ENCODE measurements at regions of chr7 and their contacts with region 1.

Region 1: GRCh38 chr7:55951637-55952351 is at the start of gene MRPS17:
- DNase-seq: peak; percentile 94
- ATAC-seq: peak; percentile 100
- H3K4me3 ChIP-seq: peak within 1 kb of the TSS; percentile 72 to 87 (median 83)
- H3K4me3 Mint-ChIP-seq: peak within 1 kb of the TSS; percentile 96
- H3K27ac ChIP-seq: peak within 1 kb of the TSS; percentile 79 to 90
- H3K27ac Mint-ChIP-seq: peak within 1 kb of the TSS; percentile 93
- H3K4me1 ChIP-seq: peaks cover 5 to 19% of the 10 kb centered on the region in 2 donors
- H3K4me1 Mint-ChIP-seq: peaks cover 13% of the 10 kb centered on the region
- H3K27me3 ChIP-seq: no peaks in the 10 kb centered on the region
- H3K27me3 Mint-ChIP-seq: no peaks in the 10 kb centered on the region
- CTCF ChIP-seq: no peak
- total RNA-seq, gene MRPS17: 10.3 and 13.0 TPM in 2 replicates

Region 2: DNA sequence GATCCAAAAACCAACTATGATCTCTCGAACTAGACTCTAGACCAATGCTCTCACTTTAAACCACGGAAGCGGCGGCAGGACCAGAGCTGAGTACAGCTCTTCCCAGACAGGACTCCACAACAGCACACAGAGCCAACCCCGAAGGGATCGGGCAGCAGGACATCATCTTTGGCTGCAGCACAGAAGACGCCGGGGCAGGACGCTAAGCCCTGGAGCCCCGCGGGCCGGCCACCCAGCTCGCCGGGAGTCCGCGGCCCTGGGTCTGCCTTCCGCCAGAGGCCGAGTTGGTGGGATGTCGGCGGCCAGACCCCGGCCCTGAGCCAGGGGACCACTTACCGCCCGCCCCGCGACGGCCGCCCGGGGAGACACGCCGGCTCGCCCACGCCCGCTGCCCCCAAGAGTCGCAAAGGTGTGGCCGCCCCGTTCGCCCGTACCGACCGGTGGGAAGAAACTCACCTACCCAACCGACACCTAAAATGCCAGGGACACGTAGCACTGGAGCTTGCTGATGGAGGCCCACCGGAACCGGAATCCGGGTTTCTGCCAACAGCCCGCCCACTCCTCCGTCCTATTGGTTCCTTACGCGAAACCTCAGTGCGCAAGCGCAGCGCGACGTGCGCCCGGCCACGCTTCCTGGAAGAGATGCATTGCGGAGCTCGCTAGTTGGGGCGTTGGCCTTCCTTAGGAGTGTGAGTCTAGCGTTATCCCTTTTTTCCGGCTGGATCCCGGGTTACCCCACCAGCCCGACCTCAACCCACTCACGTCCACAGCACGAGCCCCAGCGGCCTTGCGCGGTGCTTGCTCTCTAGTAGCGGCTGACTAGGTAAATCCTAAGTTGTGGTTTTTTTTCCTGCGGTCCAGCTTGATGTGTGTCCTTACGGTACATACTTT is 1192.8 kb before region 1 on chr7 and contains the start of gene SEC61G:
- CTCF ChIA-PET with region 1: no interaction called
- POLR2A ChIA-PET with region 1: no interaction called
- intact Hi-C with region 1: loop called (anchors 2 kb)
- DNase-seq: peak; percentile 96
- ATAC-seq: peak; percentile 97
- H3K4me3 ChIP-seq: peak within 1 kb of the TSS; percentile 63 to 94 (median 89)
- H3K4me3 Mint-ChIP-seq: peak within 1 kb of the TSS; percentile 100
- H3K27ac ChIP-seq: peak within 1 kb of the TSS; percentile 78 to 80
- H3K27ac Mint-ChIP-seq: peak within 1 kb of the TSS; percentile 96
- H3K4me1 ChIP-seq: peaks cover 10 to 21% of the 10 kb centered on the region in 2 donors
- H3K4me1 Mint-ChIP-seq: peaks cover 27% of the 10 kb centered on the region
- H3K27me3 ChIP-seq: no peaks in the 10 kb centered on the region
- H3K27me3 Mint-ChIP-seq: peaks cover 2% of the 10 kb centered on the region
- CTCF ChIP-seq: no peak
- total RNA-seq, gene SEC61G: 23.6 and 26.8 TPM in 2 replicates

Region 3: GRCh38 chr7:55887821-55888247 is 64.0 kb before region 1 on chr7:
- CTCF ChIA-PET with region 1: no interaction called
- POLR2A ChIA-PET with region 1: no interaction called
- intact Hi-C with region 1: loop called (anchors 1 kb)
- DNase-seq: peak; percentile 34
- ATAC-seq: no peak
- H3K4me3 ChIP-seq: peak overlapping the region; percentile 36 to 70 (median 59)
- H3K4me3 Mint-ChIP-seq: peak overlapping the region; percentile 90
- H3K27ac ChIP-seq: no peak overlapping the region
- H3K27ac Mint-ChIP-seq: peak overlapping the region; percentile 86
- H3K4me1 ChIP-seq: peaks cover 0 to 11% of the 10 kb centered on the region in 2 donors
- H3K4me1 Mint-ChIP-seq: peaks cover 8% of the 10 kb centered on the region
- H3K27me3 ChIP-seq: no peaks in the 10 kb centered on the region
- H3K27me3 Mint-ChIP-seq: peaks cover 4% of the 10 kb centered on the region
- CTCF ChIP-seq: no peak

Region 4: DNA sequence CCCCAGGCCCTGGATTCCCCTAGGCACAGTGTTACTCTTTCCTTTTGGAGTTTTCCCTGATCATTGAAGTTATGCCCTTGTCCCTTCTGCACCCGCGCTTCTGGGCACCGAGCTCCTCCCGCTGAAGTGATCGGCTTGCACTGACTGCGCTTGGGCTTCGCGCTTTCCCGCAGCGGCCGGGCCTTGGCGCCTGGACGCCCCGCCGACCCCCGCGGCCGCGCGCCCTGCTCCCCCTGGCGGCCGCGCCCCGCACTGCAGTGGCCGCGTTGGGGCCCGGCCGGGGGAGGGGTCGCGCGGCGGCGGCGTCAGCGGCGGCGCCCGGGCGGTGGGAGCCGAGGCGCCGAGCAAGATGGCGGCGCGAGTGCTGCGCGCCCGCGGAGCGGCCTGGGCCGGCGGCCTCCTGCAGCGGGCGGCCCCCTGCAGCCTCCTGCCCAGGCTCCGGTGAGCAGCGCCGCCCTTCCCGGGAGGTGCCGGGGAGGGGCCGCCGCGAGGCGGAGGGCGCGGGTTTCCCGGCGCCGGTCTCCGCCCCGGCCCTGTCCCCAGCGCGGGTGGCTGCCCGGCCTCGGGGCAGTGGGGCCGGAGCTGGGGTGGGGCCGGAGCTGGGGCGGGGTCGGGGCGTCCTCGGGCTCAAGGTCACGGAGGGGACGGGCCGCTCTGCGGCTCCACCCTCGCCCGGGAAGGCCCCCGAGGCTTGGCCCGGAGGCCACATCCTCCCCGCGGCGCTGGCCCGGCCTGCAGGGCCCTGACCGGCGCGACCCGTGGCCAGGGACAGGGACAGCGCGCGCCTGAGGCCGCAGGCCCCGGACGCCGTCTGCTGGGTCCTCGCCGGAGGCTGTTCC is 12.7 kb after region 1 on chr7 and contains the start of gene NIPSNAP2:
- CTCF ChIA-PET with region 1: interaction called, 9 read pairs
- POLR2A ChIA-PET with region 1: no interaction called
- intact Hi-C with region 1: loop called (anchors 1 kb)
- DNase-seq: peak; percentile 80
- ATAC-seq: peak; percentile 90
- H3K4me3 ChIP-seq: peak within 1 kb of the TSS; percentile 48 to 66 (median 58)
- H3K4me3 Mint-ChIP-seq: peak within 1 kb of the TSS; percentile 91
- H3K27ac ChIP-seq: peak within 1 kb of the TSS; percentile 75 to 88
- H3K27ac Mint-ChIP-seq: peak within 1 kb of the TSS; percentile 93
- H3K4me1 ChIP-seq: peaks cover 8 to 16% of the 10 kb centered on the region in 2 donors
- H3K4me1 Mint-ChIP-seq: peaks cover 36% of the 10 kb centered on the region
- H3K27me3 ChIP-seq: no peaks in the 10 kb centered on the region
- H3K27me3 Mint-ChIP-seq: no peaks in the 10 kb centered on the region
- CTCF ChIP-seq: peak; percentile 58
- total RNA-seq, gene NIPSNAP2: 40.4 and 42.6 TPM in 2 replicates

Region 5: DNA sequence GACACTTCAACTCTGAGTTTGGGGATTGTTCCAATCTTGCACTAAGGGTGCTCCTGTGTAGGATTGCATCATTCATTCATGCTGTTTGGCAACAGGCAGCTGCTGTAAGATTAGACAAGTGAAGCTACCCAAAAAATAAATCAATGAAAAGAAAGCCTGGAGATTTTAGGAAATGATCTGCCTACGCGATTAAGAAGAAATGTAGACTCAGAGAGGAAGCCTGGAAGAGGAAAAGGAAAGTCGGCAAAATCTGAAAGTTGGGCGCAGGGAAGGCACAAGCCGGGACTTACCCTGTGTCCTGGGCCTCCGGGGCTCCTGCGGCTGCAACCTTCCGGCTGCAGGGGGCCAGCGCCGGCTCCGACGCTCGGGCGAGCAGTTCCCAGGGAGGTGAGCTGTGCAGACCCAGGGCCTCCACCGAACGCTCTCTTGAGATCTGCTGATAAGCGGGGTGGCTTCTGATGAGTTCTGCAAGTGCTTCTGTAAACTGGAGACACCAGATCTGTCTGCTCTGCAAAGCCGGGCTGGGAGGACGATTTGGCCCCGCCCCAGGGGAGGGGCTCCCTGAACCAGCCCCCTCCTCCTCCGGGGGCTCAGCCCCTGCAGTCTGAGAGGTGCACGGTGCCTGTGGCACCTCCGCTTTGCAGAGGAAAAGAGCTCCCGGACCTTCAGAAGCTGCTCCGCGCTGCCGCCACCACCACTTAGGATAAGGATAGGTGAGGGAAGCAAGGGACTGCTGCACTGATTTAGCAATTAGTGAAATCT is 82.1 kb after region 1 on chr7:
- CTCF ChIA-PET with region 1: no interaction called
- POLR2A ChIA-PET with region 1: no interaction called
- intact Hi-C with region 1: loop called (anchors 1 kb)
- DNase-seq: peak; percentile 74
- ATAC-seq: peak; percentile 99
- H3K4me3 ChIP-seq: peak overlapping the region; percentile 50 to 77 (median 70)
- H3K4me3 Mint-ChIP-seq: peak overlapping the region; percentile 84
- H3K27ac ChIP-seq: peak overlapping the region in 1 of 2 donors; percentile 23
- H3K27ac Mint-ChIP-seq: peak overlapping the region; percentile 8
- H3K4me1 ChIP-seq: peaks cover 3 to 8% of the 10 kb centered on the region in 2 donors
- H3K4me1 Mint-ChIP-seq: peaks cover 6% of the 10 kb centered on the region
- H3K27me3 ChIP-seq: no peaks in the 10 kb centered on the region
- H3K27me3 Mint-ChIP-seq: no peaks in the 10 kb centered on the region
- CTCF ChIP-seq: peak; percentile 29

Region 6: DNA sequence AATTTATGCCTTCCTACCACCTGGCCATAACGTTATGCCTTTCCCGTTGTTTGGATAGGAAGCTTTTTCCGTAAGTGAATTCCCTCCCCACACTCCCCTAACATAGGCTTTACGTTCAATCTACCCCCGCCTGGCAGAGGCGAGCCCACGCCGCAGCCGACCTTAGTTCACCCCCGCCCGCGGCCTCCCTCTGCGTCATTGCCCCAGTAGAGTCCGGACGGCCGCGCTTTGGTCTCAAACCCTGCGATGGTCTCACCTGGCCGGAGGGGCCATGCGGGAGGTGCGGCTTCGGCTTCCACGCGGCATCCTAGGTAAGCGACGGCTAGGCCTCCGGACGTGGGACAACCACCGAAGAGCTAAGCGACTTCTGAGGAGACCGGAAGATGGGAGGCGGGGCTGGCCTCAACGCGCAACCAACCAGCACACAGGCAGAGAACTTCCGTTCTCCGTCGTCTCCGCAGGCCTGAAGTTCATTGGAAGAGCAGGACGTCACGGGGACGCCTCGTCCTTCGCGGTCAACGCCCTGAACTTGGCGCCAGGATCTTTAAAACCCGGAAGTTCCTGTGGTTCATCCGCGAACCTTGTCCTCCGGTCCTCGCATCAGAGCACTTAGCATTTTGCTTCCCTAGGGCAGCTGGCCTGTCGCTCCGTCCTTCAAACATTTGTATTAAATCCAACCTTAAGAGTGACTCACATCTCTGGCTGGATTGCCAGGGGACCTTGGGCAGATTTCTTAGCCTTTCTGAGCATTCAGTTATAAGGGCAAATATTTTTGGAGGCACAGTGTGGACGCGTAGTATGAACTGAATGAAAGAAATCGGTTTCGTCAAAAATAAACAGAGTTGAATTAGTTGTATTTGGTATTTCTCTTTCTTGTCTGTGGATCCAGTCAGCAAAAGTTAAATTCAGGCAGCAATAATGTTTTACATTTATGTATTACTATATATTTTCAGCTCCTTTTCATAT is 154.6 kb after region 1 on chr7 and contains the start of gene CHCHD2:
- CTCF ChIA-PET with region 1: no interaction called
- POLR2A ChIA-PET with region 1: no interaction called
- intact Hi-C with region 1: loop called (anchors 1 kb)
- DNase-seq: peak; percentile 97
- ATAC-seq: peak; percentile 99
- H3K4me3 ChIP-seq: peak within 1 kb of the TSS; percentile 75 to 99 (median 87)
- H3K4me3 Mint-ChIP-seq: peak within 1 kb of the TSS; percentile 99
- H3K27ac ChIP-seq: peak within 1 kb of the TSS; percentile 77 to 89
- H3K27ac Mint-ChIP-seq: peak within 1 kb of the TSS; percentile 98
- H3K4me1 ChIP-seq: peaks cover 17 to 22% of the 10 kb centered on the region in 2 donors
- H3K4me1 Mint-ChIP-seq: peaks cover 36% of the 10 kb centered on the region
- H3K27me3 ChIP-seq: peaks cover 0 to 3% (median 0%) of the 10 kb centered on the region in 4 experiments
- H3K27me3 Mint-ChIP-seq: peaks cover 3% of the 10 kb centered on the region
- CTCF ChIP-seq: no peak
- total RNA-seq, gene CHCHD2: 166 and 168 TPM in 2 replicates